HCT116 (cell line): ENCODE measurements at regions of chr20 and their contacts with region 1.

Region 1: GRCh38 chr20:46013826-46014516 is 5.3 kb downstream of the MMP9 start:
- DNase-seq: peak; percentile 56
- ATAC-seq: peak; percentile 92
- H3K4me3 ChIP-seq: peak overlapping the region; percentile 36 to 47
- H3K27ac ChIP-seq: peak overlapping the region; percentile 59; the same call in 1 of the 2 replicates
- H3K4me1 ChIP-seq: peaks cover 6 to 16% of the 10 kb centered on the region in 2 experiments; a peak in 3 of 4 replicates
- H3K27me3 ChIP-seq: no peaks in the 10 kb centered on the region
- CTCF ChIP-seq: peak; percentile 71 to 84 (median 79)
- POLR2A ChIP-seq: no peak
- RAD21 ChIP-seq: peak; percentile 68

Region 2: DNA sequence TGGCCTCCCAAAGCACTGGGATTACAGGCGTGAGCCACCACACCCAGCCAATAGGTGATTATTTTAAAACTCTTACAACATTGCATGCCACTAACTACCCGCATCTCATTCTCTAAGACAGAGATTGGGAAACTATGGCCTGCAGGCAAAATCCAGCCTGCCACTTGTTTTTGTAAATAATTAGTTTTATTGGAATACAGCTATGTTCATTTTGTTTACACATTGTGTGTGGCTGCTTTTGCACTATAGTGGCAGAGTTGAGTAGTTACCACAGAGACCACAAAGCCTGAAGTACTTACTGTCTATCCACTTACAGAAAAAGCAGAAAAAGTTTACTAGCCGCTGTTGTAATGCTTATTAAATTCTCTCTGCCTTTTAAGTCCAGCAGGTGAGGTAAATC is 1448.0 kb before region 1 on chr20:
- CTCF ChIA-PET with region 1: no interaction called
- POLR2A ChIA-PET with region 1: no interaction called
- RAD21 ChIA-PET with region 1: no interaction called
- intact Hi-C with region 1: no loop called
- DNase-seq: no peak
- ATAC-seq: no peak
- H3K4me3 ChIP-seq: no peak overlapping the region
- H3K27ac ChIP-seq: no peak overlapping the region
- H3K4me1 ChIP-seq: no peaks in the 10 kb centered on the region
- H3K27me3 ChIP-seq: no peaks in the 10 kb centered on the region
- CTCF ChIP-seq: no peak
- POLR2A ChIP-seq: no peak
- RAD21 ChIP-seq: no peak

Region 3: GRCh38 chr20:45987108-45987780 is 26.7 kb before region 1 on chr20:
- CTCF ChIA-PET with region 1: interaction called, 16 read pairs
- POLR2A ChIA-PET with region 1: no interaction called
- RAD21 ChIA-PET with region 1: interaction called in 1 of 2 experiments, 3 read pairs
- intact Hi-C with region 1: no loop called
- DNase-seq: peak; percentile 61
- ATAC-seq: peak; percentile 99
- H3K4me3 ChIP-seq: no peak overlapping the region
- H3K27ac ChIP-seq: no peak overlapping the region
- H3K4me1 ChIP-seq: peaks cover 0 to 6% of the 10 kb centered on the region in 2 experiments; a peak in 1 of 4 replicates
- H3K27me3 ChIP-seq: no peaks in the 10 kb centered on the region
- CTCF ChIP-seq: peak; percentile 85 to 96 (median 94)
- POLR2A ChIP-seq: no peak
- RAD21 ChIP-seq: peak; percentile 84

Region 4: GRCh38 chr20:46089417-46090388 is 75.7 kb after region 1 on chr20 and contains the start of gene NCOA5:
- CTCF ChIA-PET with region 1: interaction called, 12 read pairs
- POLR2A ChIA-PET with region 1: no interaction called
- RAD21 ChIA-PET with region 1: interaction called in 1 of 2 experiments, 3 read pairs
- intact Hi-C with region 1: no loop called
- DNase-seq: peak; percentile 88
- ATAC-seq: peak; percentile 89
- H3K4me3 ChIP-seq: peak within 1 kb of the TSS; percentile 84 to 93
- H3K27ac ChIP-seq: peak within 1 kb of the TSS; percentile 95
- H3K4me1 ChIP-seq: peaks cover 24 to 47% of the 10 kb centered on the region in 2 experiments
- H3K27me3 ChIP-seq: no peaks in the 10 kb centered on the region
- CTCF ChIP-seq: no peak
- POLR2A ChIP-seq: peak; percentile 89
- RAD21 ChIP-seq: peak; percentile 32; the same call in 1 of the 2 replicates
- total RNA-seq, gene NCOA5: 31.6 TPM

Region 5: DNA sequence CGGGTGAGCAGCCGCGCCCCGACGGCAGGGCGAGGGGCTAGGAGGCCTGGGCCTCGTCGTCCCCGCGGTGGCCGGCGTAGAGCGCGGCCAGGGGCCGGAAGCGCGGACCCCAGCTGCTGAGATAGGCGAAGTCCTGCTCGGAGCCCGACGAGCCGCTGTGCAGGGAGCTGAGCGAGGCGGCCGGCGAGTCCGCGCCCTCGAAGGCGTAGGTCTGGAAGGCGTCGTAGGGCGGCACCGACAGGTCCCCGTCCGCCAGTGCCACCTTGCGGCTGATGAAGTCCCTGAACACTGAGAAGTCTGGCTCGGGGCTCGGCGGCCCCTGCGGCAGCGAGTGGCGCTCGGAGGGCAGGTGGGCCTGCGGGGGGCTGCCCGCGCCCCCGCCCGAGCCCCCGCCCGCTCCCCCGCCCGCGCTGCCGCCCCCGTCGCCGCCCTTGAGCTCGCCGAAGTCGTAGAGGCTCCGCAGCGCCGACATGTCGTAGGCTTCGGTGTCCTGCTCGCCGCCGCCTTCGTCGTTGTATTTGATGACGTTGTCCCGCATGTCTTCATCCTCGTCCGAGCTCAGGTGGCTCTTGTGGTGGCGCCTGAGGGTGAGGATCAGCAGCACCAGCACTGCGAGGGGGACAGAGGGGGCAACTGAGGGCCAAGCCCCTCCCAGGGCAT is 160.6 kb after region 1 on chr20:
- CTCF ChIA-PET with region 1: no interaction called
- POLR2A ChIA-PET with region 1: no interaction called
- RAD21 ChIA-PET with region 1: no interaction called
- intact Hi-C with region 1: loop called (anchors 2 kb)
- DNase-seq: peak; percentile 13
- ATAC-seq: peak; percentile 96
- H3K4me3 ChIP-seq: peak overlapping the region in 1 of 2 experiments; percentile 8; a peak in 1 of 4 replicates
- H3K27ac ChIP-seq: no peak overlapping the region; the same call in 1 of the 2 replicates
- H3K4me1 ChIP-seq: peaks cover 0 to 9% of the 10 kb centered on the region in 2 experiments; a peak in 2 of 4 replicates
- H3K27me3 ChIP-seq: peaks cover 23% of the 10 kb centered on the region; the same call in 1 of the 2 replicates
- CTCF ChIP-seq: peak in 2 of 3 experiments; percentile 25 to 50; a peak in 3 of 6 replicates
- POLR2A ChIP-seq: no peak
- RAD21 ChIP-seq: peak; percentile 37; the same call in 1 of the 2 replicates